ENCODE measurements at regions of chr11 and their contacts with region 1.

Region 1: DNA sequence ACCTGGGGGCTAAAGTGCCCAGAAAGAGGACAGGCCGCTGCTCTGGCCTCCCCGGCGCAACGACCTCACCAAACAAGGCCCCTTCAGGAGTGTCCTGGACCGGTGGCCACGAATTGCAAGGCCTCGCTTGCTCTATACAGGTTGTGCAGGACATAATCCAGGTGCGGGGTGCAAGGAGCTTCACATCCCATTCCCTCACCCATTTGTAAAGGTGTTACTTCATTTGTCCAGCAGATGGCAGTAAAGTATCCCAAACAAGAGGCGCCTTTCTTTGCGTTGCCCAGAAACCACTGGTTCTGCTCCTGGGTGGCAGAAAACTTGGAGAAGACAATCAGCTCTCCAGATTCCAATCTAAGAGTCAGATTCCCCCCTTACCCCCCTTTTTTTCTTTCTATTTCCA is 35.9 kb upstream of the PRDM11 start:
- DNase-seq: peak; percentile 70 to 78
- ATAC-seq: peak; percentile 74 to 90; a peak in 5 of 6 replicates
- H3K4me3 ChIP-seq: no peak overlapping the region
- H3K27ac ChIP-seq: no peak overlapping the region
- H3K4me1 ChIP-seq: no peaks in the 10 kb centered on the region
- CTCF ChIP-seq: peak; percentile 81
- EP300 ChIP-seq: no peak
- POLR2A ChIP-seq: no peak
- RAD21 ChIP-seq: peak; percentile 91 to 93

Region 2: GRCh38 chr11:44936525-44936924 is 174.0 kb before region 1 on chr11:
- CTCF ChIA-PET with region 1: interaction called, 1,740 read pairs
- POLR2A ChIA-PET with region 1: no interaction called
- DNase-seq: peak; percentile 68 to 80
- ATAC-seq: peak; percentile 88 to 93
- H3K4me3 ChIP-seq: no peak overlapping the region
- H3K27ac ChIP-seq: no peak overlapping the region
- H3K4me1 ChIP-seq: 0 out of 3 replicates have a peak, but pooled peaks cover 3% of the 10 kb centered on the region
- CTCF ChIP-seq: peak; percentile 88
- EP300 ChIP-seq: no peak
- POLR2A ChIP-seq: no peak
- RAD21 ChIP-seq: peak; percentile 97

Region 3: GRCh38 chr11:45180179-45180842 is 69.7 kb after region 1 on chr11:
- CTCF ChIA-PET with region 1: interaction called, 19 read pairs
- POLR2A ChIA-PET with region 1: interaction called, 9 read pairs
- DNase-seq: peak; percentile 60 to 76
- ATAC-seq: peak; percentile 82 to 87
- H3K4me3 ChIP-seq: peak overlapping the region; percentile 64
- H3K27ac ChIP-seq: peak overlapping the region; percentile 97 to 98
- H3K4me1 ChIP-seq: peaks cover 16% of the 10 kb centered on the region
- CTCF ChIP-seq: peak; percentile 36
- EP300 ChIP-seq: no peak
- POLR2A ChIP-seq: no peak
- RAD21 ChIP-seq: no peak; a peak in 1 of 5 replicates

Region 4: DNA sequence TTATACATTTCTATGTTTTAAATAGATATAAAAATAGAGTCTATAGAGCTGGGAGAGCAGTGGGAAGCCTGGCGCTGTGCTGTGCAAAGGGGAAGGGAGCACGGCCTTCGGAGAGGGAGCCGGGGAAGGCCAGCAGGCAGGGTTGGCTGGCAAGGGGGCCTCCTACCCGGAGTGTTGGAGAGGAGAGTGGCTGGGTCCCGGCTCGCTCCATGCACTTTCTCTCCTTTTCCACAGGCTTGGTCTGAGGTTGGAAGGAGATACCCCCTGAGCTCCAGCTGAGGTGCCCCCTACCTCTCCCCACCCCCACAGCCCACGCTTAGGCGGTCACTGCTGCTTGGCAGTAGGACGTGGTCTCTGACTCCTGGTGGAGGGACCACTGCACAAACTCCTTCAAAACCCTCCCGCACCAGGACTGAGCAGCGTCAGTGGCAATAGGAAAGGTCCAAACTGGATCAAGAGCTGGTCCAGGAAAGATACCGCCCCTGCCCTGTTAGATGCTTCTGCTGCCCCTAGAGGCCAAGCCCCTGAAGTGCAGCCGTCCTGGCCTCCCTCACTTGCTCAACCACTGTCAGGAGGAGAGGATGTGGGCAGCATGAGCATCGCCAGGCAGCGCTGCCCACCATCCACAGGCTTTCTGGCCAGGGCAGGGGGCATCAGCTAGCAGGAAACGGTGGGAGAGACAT is 122.7 kb after region 1 on chr11:
- CTCF ChIA-PET with region 1: interaction called, 19 read pairs
- POLR2A ChIA-PET with region 1: no interaction called
- DNase-seq: peak; percentile 61 to 93
- ATAC-seq: peak; percentile 87 to 96
- H3K4me3 ChIP-seq: no peak overlapping the region
- H3K27ac ChIP-seq: no peak overlapping the region
- H3K4me1 ChIP-seq: no peaks in the 10 kb centered on the region
- CTCF ChIP-seq: peak; percentile 61
- EP300 ChIP-seq: no peak
- POLR2A ChIP-seq: no peak
- RAD21 ChIP-seq: peak; percentile 31 to 41; a peak in 2 of 5 replicates

Region 5: GRCh38 chr11:45267052-45267451 is 156.5 kb after region 1 on chr11:
- CTCF ChIA-PET with region 1: interaction called, 17 read pairs
- POLR2A ChIA-PET with region 1: no interaction called
- DNase-seq: peak in 1 of 2 experiments; percentile 38
- ATAC-seq: peak in 1 of 2 experiments; percentile 29; a peak in 2 of 6 replicates
- H3K4me3 ChIP-seq: no peak overlapping the region
- H3K27ac ChIP-seq: peak overlapping the region; percentile 78 to 86
- H3K4me1 ChIP-seq: peaks cover 90% of the 10 kb centered on the region
- CTCF ChIP-seq: peak; percentile 50
- EP300 ChIP-seq: no peak
- POLR2A ChIP-seq: no peak
- RAD21 ChIP-seq: no peak

Region 6: DNA sequence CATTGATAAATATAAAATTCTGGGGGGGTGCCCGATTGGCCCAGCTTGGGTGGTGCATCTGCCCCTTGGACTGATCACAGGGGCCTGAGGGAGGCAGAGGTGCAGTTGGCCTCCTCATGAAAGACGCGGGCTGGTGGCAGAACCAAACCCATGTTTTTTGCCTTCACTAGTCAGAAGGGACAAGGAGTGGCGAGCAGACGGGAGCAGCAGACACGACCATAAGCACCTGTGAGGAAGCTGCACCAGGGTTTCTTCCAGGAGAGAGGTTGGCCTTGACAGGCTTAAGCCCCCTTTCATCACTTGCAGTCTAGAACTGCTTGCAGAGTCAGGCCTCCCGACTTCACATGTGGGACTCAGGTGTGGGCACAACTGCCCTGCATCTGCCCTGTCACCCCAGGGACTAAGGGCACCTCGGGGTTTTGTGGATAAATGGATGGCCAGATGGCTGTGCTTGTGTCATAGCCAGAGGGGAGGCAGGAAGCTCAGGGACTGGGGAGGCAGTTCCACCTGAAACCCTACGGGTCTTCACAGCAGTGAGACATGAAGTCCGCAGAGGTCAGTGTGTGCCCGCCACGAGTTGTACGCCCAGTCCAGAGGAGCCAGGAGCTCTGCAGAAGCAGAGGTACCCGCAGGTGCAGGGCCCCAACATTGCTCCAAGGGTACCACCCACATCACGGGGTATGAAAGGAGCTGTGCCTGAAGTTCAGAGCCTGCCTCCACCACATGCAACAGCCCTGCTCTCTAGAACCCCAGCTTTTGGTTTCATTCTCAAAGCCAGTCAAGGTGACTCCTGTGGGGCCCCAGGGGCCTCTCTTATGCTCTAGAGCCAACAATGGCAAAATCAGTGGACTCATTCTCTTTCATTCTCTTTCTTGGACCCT is 193.8 kb after region 1 on chr11:
- CTCF ChIA-PET with region 1: interaction called, 14 read pairs
- POLR2A ChIA-PET with region 1: no interaction called
- DNase-seq: no peak
- ATAC-seq: no peak
- H3K4me3 ChIP-seq: no peak overlapping the region
- H3K27ac ChIP-seq: no peak overlapping the region
- H3K4me1 ChIP-seq: peaks cover 4% of the 10 kb centered on the region; the same call in 1 of the 3 replicates
- CTCF ChIP-seq: no peak
- EP300 ChIP-seq: no peak
- POLR2A ChIP-seq: no peak
- RAD21 ChIP-seq: no peak

Measured in A549 (cell line).